ENCODE measurements at regions of chr10 and their contacts with region 1.

Region 1: DNA sequence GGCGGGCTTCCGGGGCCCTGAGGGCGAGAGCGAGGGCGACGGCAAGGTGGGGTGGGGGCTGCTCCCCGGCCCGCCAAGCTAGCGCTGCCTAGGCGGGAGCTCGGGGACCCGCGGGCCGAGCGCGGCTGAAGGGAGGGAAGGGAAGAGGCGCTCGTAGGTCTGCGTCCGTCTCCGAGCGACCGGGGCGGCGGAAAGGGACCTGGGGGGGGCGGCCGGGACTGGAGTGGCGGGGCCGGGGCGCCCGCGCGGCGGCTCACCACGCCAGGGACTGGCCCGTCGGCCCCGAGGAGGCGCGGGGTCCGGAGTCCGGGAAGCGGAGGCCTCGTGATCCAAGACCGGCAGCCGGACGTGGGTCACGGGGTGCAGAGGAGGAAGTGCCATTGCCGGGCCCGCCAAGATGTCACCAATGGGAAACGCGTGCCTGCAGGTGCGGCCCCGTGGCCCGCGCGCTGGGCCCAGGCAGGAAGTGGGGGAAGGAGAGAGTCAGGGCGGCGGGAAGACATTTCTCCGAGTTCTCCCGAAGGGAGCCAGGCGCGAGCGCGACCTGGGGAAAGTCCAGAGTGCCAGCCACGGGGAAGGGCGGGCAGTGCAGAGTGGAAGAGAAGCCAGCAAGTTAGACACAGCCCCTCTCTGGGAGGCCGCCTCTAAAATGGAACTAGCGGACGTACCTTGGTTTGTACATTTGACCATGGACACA is 11.9 kb downstream of the HNRNPF start:
- DNase-seq: peak; percentile 92
- H3K4me3 Mint-ChIP-seq: peak overlapping the region; percentile 81
- H3K27ac Mint-ChIP-seq: peak overlapping the region; percentile 100
- H3K4me1 Mint-ChIP-seq: peaks cover 63% of the 10 kb centered on the region
- H3K27me3 Mint-ChIP-seq: no peaks in the 10 kb centered on the region

Region 2: DNA sequence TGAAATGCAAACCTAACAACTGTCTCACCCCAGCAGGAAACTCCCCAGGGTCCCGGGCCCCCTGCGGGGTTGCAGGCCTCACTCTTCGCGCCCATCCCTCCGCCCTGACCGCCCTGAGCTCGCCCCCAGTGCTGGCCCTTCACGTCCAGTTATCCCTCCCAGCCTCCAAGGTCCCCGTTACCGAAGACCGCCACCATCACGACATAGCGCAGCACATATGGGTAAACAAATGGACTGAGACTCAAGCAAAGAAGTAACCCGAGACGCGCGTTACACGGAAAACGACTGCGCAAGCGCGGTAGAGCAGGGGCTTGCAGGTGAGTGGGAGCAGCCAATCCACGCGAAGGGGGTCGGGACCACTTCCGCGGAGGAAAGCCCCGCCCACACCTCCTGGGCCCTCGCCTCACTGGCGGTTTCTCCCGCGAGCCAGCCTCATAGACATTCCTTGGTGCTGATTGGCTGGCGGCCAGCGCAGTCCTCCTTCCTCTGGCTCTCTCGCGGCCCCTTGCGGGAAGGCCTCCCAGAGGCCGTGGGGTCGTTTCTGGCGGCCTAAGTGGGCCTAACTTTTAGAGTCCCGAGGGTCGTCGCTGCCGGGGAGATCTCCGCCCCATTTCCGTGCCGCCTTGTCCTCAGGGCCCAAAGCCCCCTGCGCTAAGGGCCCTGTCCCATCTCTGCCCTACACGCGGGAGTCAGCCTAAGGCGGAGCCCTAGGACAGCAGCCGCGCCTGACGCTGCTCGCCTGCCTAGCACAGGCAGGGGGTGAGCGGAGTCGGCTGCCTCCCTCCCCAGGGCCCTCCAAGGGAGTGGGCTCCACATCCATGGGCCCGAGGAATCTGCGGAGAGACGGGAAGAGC is 34.9 kb before region 1 on chr10:
- CTCF ChIA-PET with region 1: no interaction called
- POLR2A ChIA-PET with region 1: interaction called, 5 read pairs
- intact Hi-C with region 1: loop called (anchors 1 kb)
- DNase-seq: peak; percentile 99
- H3K4me3 Mint-ChIP-seq: peak overlapping the region; percentile 98
- H3K27ac Mint-ChIP-seq: peak overlapping the region; percentile 98
- H3K4me1 Mint-ChIP-seq: peaks cover 20% of the 10 kb centered on the region
- H3K27me3 Mint-ChIP-seq: no peaks in the 10 kb centered on the region

Region 3: GRCh38 chr10:43383204-43383971 is 13.7 kb before region 1 on chr10:
- CTCF ChIA-PET with region 1: no interaction called
- POLR2A ChIA-PET with region 1: interaction called, 21 read pairs
- intact Hi-C with region 1: loop called (anchors 1 kb)
- DNase-seq: no peak
- H3K4me3 Mint-ChIP-seq: no peak overlapping the region
- H3K27ac Mint-ChIP-seq: no peak overlapping the region
- H3K4me1 Mint-ChIP-seq: peaks cover 19% of the 10 kb centered on the region
- H3K27me3 Mint-ChIP-seq: no peaks in the 10 kb centered on the region

Region 4: DNA sequence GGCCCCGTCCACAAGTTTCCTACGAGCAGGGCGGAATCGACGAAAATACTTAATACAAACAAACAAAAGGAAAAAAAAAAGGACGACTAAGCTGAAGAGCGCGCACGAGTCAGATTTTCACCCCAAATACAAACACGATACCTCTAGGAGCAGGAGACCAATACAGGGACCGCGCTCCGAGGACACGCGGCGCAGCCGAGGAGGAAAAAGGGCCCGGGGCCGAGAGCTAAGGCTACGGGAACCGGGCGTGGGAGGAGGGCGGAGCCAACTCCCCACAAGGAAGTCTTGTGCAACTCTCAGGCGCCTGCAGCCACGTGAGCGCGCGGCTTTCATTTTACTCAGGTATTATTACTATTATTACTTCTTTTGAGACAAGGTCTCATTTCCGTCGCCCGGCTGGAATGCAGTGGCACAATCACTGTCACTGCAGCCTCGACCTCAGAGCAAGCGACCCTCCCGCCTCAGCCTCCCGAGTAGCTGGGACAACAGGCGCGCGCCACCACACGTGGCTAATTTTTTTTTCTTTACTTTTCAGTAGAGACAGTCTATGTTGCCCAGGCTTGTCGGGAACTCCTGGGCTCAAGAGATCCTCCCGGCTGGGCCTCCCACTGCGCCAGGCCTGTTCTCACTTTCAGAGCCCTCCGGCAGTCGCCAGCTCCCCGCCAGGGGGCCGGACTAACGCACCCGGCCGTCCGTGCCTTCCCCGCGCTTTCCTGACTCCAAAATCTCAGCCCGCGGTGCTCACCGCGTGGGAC is 10.7 kb after region 1 on chr10:
- CTCF ChIA-PET with region 1: interaction called, 4 read pairs
- POLR2A ChIA-PET with region 1: interaction called, 47 read pairs
- intact Hi-C with region 1: loop called (anchors 1 kb)
- DNase-seq: peak; percentile 95
- H3K4me3 Mint-ChIP-seq: peak overlapping the region; percentile 97
- H3K27ac Mint-ChIP-seq: peak overlapping the region; percentile 100
- H3K4me1 Mint-ChIP-seq: peaks cover 20% of the 10 kb centered on the region
- H3K27me3 Mint-ChIP-seq: no peaks in the 10 kb centered on the region

Region 5: GRCh38 chr10:43420369-43421200 is 23.5 kb after region 1 on chr10:
- CTCF ChIA-PET with region 1: interaction called, 4 read pairs
- POLR2A ChIA-PET with region 1: interaction called, 22 read pairs
- intact Hi-C with region 1: loop called (anchors 1 kb)
- DNase-seq: peak; percentile 91
- H3K4me3 Mint-ChIP-seq: peak overlapping the region; percentile 80
- H3K27ac Mint-ChIP-seq: peak overlapping the region; percentile 98
- H3K4me1 Mint-ChIP-seq: peaks cover 41% of the 10 kb centered on the region
- H3K27me3 Mint-ChIP-seq: no peaks in the 10 kb centered on the region

Region 6: DNA sequence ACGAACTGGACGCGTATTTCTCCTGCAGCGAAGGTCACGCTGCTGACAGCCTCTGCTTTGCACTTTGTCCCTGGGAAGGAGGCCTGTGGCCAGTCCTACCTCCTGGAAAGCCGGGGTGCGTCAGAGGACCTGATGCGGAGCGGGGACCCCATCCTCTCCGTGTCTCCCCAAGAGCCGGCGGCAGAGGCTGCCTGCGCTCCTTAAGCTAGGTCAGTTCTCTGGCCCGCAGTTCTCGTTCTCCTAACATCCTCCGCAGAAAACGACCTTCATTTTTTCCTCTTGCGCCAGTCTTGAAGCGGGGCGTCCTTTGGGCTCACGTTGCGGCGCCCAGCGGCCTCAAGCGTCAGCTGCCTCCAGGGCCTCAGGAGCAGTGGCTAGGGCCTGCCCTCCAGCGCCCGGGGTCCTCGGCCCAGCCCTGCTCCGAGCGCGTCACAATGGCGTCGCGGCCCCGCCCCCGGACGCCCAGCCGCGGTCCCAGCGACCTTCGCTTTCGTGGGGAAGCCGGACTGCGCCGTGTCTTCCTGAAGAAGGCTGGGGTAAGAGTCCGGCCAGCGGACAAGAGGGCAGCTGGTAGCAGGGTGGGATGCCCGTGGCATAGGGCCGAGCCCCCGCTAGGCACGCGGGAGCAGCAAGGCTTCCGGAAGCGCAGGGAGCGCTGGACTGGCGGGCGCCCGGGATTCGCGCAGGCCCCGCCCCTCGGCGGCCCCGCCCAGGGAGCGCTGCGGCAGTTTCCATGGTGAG is 39.5 kb after region 1 on chr10 and contains the start of gene ZNF487:
- CTCF ChIA-PET with region 1: interaction called, 3 read pairs
- POLR2A ChIA-PET with region 1: interaction called, 8 read pairs
- intact Hi-C with region 1: loop called (anchors 5 kb)
- DNase-seq: peak; percentile 94
- H3K4me3 Mint-ChIP-seq: peak within 1 kb of the TSS; percentile 83
- H3K27ac Mint-ChIP-seq: peak within 1 kb of the TSS; percentile 92
- H3K4me1 Mint-ChIP-seq: peaks cover 14% of the 10 kb centered on the region
- H3K27me3 Mint-ChIP-seq: no peaks in the 10 kb centered on the region
- total RNA-seq, gene ZNF487: 2.2 to 2.6 TPM

Region 7: GRCh38 chr10:43648398-43649184 is 251.5 kb after region 1 on chr10 and contains the start of gene ZNF32:
- CTCF ChIA-PET with region 1: no interaction called
- POLR2A ChIA-PET with region 1: no interaction called
- intact Hi-C with region 1: no loop called
- DNase-seq: peak; percentile 87
- H3K4me3 Mint-ChIP-seq: peak within 1 kb of the TSS; percentile 84
- H3K27ac Mint-ChIP-seq: peak within 1 kb of the TSS; percentile 87
- H3K4me1 Mint-ChIP-seq: peaks cover 15% of the 10 kb centered on the region
- H3K27me3 Mint-ChIP-seq: peaks cover 3% of the 10 kb centered on the region
- total RNA-seq, gene ZNF32: 12.2 to 13.5 TPM